CD14-positive monocyte (primary cell): ENCODE measurements at regions of chr22 and their contacts with region 1.

Region 1: GRCh38 chr22:49847751-49848689 is 5.6 kb upstream of the ZBED4 start:
- DNase-seq: peak; percentile 57 to 65 (median 62)
- H3K4me3 ChIP-seq: peak overlapping the region; percentile 69 to 82 (median 78)
- H3K4me3 Mint-ChIP-seq: peak overlapping the region; percentile 90 to 92
- H3K27ac ChIP-seq: peak overlapping the region; percentile 53 to 83
- H3K27ac Mint-ChIP-seq: peak overlapping the region; percentile 64 to 93 (median 86)
- H3K4me1 ChIP-seq: peaks cover 22 to 35% of the 10 kb centered on the region in 2 donors
- H3K4me1 Mint-ChIP-seq: peaks cover 22% of the 10 kb centered on the region
- H3K27me3 ChIP-seq: no peaks in the 10 kb centered on the region
- H3K27me3 Mint-ChIP-seq: peaks cover 3 to 13% (median 6%) of the 10 kb centered on the region in 3 donors
- CTCF ChIP-seq: no peak

Region 2: DNA sequence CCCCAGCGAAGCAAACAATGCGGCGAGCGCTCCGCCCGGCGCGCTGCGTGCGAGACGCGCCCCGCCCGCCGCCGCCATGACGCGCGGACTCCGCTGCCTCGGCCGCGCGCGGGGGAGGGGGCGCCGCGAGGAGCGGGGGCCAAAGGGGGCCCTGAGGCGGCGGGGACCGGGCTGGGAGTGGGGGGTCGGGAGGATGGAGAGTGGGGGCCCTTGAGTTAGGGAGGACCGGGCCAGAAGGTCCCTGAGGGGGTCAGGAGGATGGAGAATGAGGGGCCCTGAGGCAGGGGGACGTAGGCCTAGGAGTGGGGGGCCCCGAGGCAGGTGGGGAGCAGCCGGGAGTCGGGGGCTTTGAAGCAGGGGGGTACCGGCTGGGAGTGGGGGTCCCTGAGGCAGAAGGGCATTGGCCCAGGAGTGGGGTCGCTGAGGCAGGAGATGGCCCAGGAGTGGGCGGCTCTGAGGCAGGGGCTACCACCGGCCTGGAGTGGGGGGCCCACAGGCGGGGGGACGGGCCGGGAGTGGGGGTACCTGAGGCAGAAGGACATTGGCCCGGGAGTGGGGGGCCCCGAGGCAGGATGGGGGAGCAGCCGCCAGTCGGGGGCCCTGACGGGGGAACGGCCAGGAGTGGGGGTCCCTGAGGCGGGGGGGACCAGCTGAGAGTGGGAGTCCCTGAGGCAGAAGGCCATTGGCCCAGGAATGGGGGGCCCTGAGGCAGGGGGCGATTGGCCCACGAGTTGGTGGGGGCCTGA is 20.0 kb before region 1 on chr22 and contains the start of gene BRD1:
- intact Hi-C with region 1: loop called in 1 of 2 experiments (anchors 2 kb)
- DNase-seq: peak in 2 of 3 donors; percentile 55 to 59
- H3K4me3 ChIP-seq: peak within 1 kb of the TSS; percentile 52 to 79 (median 78)
- H3K4me3 Mint-ChIP-seq: peak within 1 kb of the TSS; percentile 86 to 92
- H3K27ac ChIP-seq: peak within 1 kb of the TSS; percentile 67 to 88
- H3K27ac Mint-ChIP-seq: peak within 1 kb of the TSS; percentile 71 to 86 (median 80)
- H3K4me1 ChIP-seq: peaks cover 40 to 49% of the 10 kb centered on the region in 2 donors
- H3K4me1 Mint-ChIP-seq: peaks cover 35% of the 10 kb centered on the region
- H3K27me3 ChIP-seq: no peaks in the 10 kb centered on the region
- H3K27me3 Mint-ChIP-seq: no peaks in the 10 kb centered on the region
- CTCF ChIP-seq: no peak
- polyA plus RNA-seq, gene BRD1: 0.61 to 13.8 (median 0.86) TPM

Region 3: DNA sequence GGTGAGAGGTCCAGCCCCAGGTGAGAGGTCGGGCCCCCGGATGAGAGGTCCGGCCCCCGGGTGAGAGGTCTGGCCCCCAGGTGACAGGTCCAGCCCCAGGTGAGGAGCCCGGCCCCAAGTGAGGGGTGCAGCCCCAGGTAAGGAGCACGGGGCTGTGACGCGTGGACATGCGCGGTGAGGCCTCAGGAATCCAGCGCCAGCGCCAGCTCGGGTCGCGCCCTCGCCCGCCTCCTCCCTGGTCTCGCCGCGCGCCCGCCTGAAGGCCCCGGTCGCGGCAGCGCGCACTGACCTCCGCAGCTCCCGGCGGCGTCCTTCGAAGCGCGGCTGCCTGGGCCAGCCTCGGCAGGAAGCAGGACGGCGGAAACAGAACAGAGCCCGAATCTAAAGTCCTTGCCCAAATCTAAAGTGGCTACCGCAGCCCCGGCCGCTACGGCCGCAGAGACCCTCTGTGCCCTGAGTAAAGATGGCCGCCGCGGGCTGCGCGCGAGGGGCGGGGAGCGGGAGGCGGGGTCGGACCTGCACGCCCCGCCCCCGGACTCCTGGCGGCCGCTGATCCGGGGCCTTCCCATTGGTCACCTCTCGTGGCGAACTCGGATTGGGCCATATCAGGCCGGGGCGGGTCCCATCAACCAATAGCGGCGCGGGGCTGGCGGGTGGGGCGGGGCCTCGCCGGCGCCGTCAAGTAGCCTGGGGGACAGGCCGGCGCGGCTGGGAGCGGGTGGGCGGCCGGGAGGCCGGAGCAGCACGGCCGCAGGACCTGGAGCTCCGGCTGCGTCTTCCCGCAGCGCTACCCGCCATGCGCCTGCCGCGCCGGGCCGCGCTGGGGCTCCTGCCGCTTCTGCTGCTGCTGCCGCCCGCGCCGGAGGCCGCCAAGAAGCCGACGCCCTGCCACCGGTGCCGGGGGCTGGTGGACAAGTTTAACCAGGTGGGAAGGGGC is 70.2 kb after region 1 on chr22 and contains the starts of genes ALG12 and CRELD2:
- intact Hi-C with region 1: loop called in 1 of 2 experiments (anchors 2 kb)
- DNase-seq: peak; percentile 95 to 96 (median 95)
- H3K4me3 ChIP-seq: peak within 1 kb of the TSS; percentile 83 to 87 (median 85)
- H3K4me3 Mint-ChIP-seq: peak within 1 kb of the TSS; percentile 79 to 88
- H3K27ac ChIP-seq: peak within 1 kb of the TSS; percentile 75 to 88
- H3K27ac Mint-ChIP-seq: peak within 1 kb of the TSS; percentile 79 to 95 (median 88)
- H3K4me1 ChIP-seq: peaks cover 20 to 23% of the 10 kb centered on the region in 2 donors
- H3K4me1 Mint-ChIP-seq: peaks cover 23% of the 10 kb centered on the region
- H3K27me3 ChIP-seq: no peaks in the 10 kb centered on the region
- H3K27me3 Mint-ChIP-seq: peaks cover 0 to 2% (median 0%) of the 10 kb centered on the region in 3 donors
- CTCF ChIP-seq: no peak
- polyA plus RNA-seq, gene ALG12: 7.2 to 9.5 (median 9.0) TPM
- polyA plus RNA-seq, gene CRELD2: 20.3 to 33.2 (median 27.6) TPM